ENCODE measurements at regions of chr13 and their contacts with region 1.

Region 1: GRCh38 chr13:28478127-28478526 is 16.8 kb downstream of the FLT1 start:
- DNase-seq: no peak
- H3K4me3 ChIP-seq: no peak overlapping the region
- H3K27ac ChIP-seq: no peak overlapping the region
- H3K4me1 ChIP-seq: no peaks in the 10 kb centered on the region
- H3K27me3 ChIP-seq: peaks cover 0 to 2% (median 0%) of the 10 kb centered on the region in 5 experiments

Region 2: GRCh38 chr13:28451523-28452204 is 26.5 kb before region 1 on chr13:
- CTCF ChIA-PET with region 1: no interaction called
- POLR2A ChIA-PET with region 1: no interaction called
- DNase-seq: no peak
- H3K4me3 ChIP-seq: no peak overlapping the region
- H3K27ac ChIP-seq: no peak overlapping the region
- H3K4me1 ChIP-seq: no peaks in the 10 kb centered on the region
- H3K27me3 ChIP-seq: no peaks in the 10 kb centered on the region

Region 3: GRCh38 chr13:28489524-28489931 is 11.4 kb after region 1 on chr13:
- CTCF ChIA-PET with region 1: interaction called, 12 read pairs
- POLR2A ChIA-PET with region 1: no interaction called
- DNase-seq: peak in 2 of 3 donors; percentile 77 to 82
- H3K4me3 ChIP-seq: peak overlapping the region in 1 of 7 experiments; percentile 35
- H3K27ac ChIP-seq: no peak overlapping the region
- H3K4me1 ChIP-seq: peaks cover 13 to 47% (median 47%) of the 10 kb centered on the region in 4 experiments
- H3K27me3 ChIP-seq: peaks cover 0 to 28% (median 12%) of the 10 kb centered on the region in 5 experiments